ENCODE measurements at regions of chr10 and their contacts with region 1.

Region 1: DNA sequence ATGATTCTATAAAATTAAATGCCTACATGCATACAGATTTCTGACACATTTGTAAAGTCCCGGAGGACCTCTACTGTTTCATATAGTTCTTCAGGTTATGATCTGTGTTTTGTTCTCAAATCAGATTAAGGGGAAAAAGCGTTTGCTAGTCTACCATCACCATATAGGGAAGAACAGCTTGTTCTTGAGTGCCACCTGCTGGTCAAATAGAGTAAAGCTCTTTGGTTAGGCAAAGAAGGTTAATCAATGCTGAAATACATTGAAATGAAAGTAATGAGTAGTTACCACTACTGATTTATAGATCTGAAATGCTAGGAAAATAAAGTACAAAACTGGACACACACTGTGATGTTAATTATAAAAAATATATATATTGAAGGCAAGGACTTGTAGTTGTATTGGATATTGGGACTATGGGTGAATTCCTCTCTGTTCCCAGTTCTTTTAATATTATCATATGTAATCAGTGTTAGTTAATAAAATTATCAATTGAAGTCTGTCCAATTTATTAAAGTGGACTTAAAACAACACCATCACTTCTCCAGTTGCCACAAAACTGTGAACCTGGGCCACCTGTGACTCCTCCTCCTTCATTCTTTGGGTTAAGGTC is 72.6 kb upstream of the PDLIM1 start:
- DNase-seq: peak; percentile 61
- ATAC-seq: peak; percentile 70
- H3K4me3 Mint-ChIP-seq: no peak overlapping the region
- H3K27ac Mint-ChIP-seq: no peak overlapping the region
- H3K4me1 Mint-ChIP-seq: no peaks in the 10 kb centered on the region
- H3K27me3 Mint-ChIP-seq: peaks cover 7% of the 10 kb centered on the region

Region 2: DNA sequence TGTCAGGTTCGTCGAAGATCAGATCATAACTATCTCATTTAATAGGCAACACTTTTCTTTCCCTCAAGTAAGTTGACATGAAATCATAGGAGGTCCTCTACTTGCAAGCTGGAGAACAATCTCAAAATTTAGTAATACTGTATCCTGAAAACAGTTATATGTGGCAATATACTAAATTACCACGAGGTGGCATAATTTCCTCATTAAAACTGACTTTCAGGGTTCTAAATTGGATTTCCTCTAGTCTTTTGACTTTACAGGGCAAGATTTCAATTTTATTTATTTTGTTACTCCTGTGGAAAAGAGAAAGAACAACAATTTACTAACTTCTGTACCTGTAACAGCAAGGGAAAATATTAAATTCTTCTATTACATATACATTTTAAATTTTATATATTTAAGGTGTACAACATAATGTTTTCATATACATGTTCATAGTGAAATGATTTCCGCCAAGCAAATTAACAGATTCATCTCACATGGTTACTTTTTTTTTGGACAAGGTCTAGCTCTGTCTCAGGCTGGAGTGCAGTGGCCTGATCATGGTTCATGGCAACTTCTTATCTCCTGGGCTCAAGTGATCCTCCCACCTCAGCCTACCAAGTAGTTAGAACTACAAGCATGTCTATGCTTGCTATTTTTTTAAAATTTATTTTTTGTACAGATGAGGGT is 733.3 kb before region 1 on chr10:
- CTCF ChIA-PET with region 1: no interaction called
- POLR2A ChIA-PET with region 1: no interaction called
- intact Hi-C with region 1: loop called (anchors 1 to 2 kb)
- DNase-seq: no peak
- ATAC-seq: no peak
- H3K4me3 Mint-ChIP-seq: no peak overlapping the region
- H3K27ac Mint-ChIP-seq: no peak overlapping the region
- H3K4me1 Mint-ChIP-seq: no peaks in the 10 kb centered on the region
- H3K27me3 Mint-ChIP-seq: peaks cover 6% of the 10 kb centered on the region

Region 3: GRCh38 chr10:95133016-95133752 is 230.2 kb before region 1 on chr10:
- CTCF ChIA-PET with region 1: interaction called, 23 read pairs
- POLR2A ChIA-PET with region 1: no interaction called
- intact Hi-C with region 1: loop called (anchors 1 kb)
- DNase-seq: peak; percentile 90
- ATAC-seq: peak; percentile 87
- H3K4me3 Mint-ChIP-seq: no peak overlapping the region
- H3K27ac Mint-ChIP-seq: no peak overlapping the region
- H3K4me1 Mint-ChIP-seq: no peaks in the 10 kb centered on the region
- H3K27me3 Mint-ChIP-seq: no peaks in the 10 kb centered on the region

Region 4: DNA sequence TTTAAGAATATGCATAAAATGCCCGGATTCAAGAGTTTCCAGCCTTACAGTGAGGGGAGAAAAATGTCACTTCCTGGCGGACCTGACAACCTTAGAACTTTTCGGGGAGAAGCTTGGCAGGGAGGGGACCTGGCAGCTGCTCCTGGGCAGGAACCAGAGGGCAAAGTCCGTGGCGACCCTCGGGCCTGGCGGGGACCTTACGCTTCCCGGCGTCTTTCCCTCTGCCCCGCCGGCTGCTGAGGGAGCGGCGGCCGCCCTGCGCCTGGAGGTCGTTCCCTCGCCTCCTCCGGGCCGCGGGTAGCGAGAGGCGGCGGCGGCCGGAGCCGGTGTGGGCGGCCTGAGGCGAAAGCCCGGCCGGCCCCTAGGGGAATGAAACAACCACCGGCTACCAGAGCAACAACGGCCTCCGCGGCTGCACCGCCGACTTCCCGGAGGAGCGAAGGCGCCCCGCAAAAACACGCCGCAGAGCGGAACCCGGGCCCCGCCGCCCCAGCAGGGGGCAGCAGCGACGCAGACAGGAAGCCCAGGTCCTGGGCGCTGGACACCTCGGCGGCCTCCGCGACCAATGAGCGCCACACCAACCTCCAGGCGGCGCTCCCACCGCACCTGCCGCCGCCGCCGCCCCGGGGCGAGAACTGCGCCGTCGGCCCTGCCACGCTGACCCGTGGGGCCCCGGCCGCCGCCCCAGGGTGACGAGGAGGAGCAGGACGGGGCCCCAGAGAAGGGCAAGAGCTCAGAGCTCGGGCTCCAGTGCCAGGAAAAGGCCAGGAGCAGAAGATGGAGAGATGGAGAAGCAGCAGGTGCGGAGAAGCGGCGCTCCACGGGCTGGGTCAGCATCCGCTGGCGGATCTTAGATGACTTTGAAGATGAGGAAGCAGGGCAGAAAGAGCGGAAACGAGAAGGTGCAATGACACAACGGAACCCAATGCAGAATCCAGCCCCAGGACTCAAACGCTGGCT is 179.9 kb before region 1 on chr10:
- CTCF ChIA-PET with region 1: interaction called, 8 read pairs
- POLR2A ChIA-PET with region 1: no interaction called
- intact Hi-C with region 1: loop called (anchors 1 kb)
- DNase-seq: peak; percentile 88
- ATAC-seq: peak; percentile 96
- H3K4me3 Mint-ChIP-seq: peak overlapping the region; percentile 62
- H3K27ac Mint-ChIP-seq: no peak overlapping the region
- H3K4me1 Mint-ChIP-seq: peaks cover 3% of the 10 kb centered on the region
- H3K27me3 Mint-ChIP-seq: peaks cover 18% of the 10 kb centered on the region

Region 5: GRCh38 chr10:95295031-95295755 is 68.2 kb before region 1 on chr10:
- CTCF ChIA-PET with region 1: interaction called, 12 read pairs
- POLR2A ChIA-PET with region 1: no interaction called
- intact Hi-C with region 1: no loop called
- DNase-seq: peak; percentile 71
- ATAC-seq: peak; percentile 70
- H3K4me3 Mint-ChIP-seq: peak overlapping the region; percentile 43
- H3K27ac Mint-ChIP-seq: no peak overlapping the region
- H3K4me1 Mint-ChIP-seq: peaks cover 13% of the 10 kb centered on the region
- H3K27me3 Mint-ChIP-seq: peaks cover 28% of the 10 kb centered on the region

Measured in activated CD4-positive, alpha-beta T cell treated with anti-CD3 and anti-CD28 coated beads for 36 hours (primary cell).